ENCODE measurements at regions of chr20 and their contacts with region 1.

Region 1: DNA sequence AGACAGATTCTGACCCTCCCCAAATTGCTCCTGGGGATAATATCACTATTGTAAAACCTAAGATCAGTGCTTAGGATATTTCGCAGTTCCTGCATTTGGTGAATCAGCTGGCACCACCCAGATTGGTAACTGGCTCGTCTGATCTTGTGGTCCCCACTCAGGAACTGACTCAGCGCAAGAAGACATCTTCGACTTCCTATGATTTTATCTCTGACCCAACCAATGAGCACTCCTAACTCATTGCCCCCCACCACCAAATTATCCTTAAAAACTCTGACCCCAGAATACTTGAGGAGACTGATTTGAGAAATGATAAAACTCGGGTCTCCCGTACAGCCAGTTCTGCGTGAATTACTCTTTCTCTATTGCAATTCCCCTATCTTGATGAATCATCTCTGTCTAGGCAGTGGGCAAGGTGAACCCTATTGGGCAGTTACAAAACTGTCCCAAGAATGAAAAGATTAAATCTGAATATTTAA is 55.7 kb upstream of the PRND start:
- DNase-seq: peak; percentile 42
- H3K4me3 ChIP-seq: peak overlapping the region in 1 of 3 experiments; percentile 17
- H3K27ac ChIP-seq: peak overlapping the region; percentile 58
- H3K4me1 ChIP-seq: peaks cover 20% of the 10 kb centered on the region
- H3K27me3 ChIP-seq: no peaks in the 10 kb centered on the region
- CTCF ChIP-seq: no peak
- POLR2A ChIP-seq: no peak

Region 2: DNA sequence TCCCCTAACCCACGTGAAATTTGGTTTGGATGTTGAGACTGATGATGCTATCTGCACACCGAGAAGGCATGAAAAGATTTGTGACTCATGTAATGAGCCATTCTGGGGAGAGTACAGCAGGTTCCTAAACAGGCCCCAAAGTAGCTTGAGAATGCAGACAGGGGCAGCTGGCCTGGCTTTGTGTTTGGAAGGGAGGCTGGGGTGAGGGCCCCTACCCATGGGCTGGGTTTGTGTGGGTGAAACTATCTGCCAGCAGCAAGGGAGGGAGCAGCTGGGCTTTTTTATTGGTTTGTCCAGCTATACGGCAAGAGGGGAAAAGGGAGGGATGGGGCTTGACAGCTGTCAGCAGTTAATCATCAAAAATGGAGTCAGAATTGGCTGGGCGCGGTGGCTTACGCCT is 563.7 kb before region 1 on chr20:
- CTCF ChIA-PET with region 1: no interaction called
- POLR2A ChIA-PET with region 1: no interaction called
- dilution Hi-C with region 1: no loop called
- intact Hi-C with region 1: loop called (anchors 5 kb)
- DNase-seq: no peak
- H3K4me3 ChIP-seq: no peak overlapping the region
- H3K27ac ChIP-seq: no peak overlapping the region
- H3K4me1 ChIP-seq: no peaks in the 10 kb centered on the region
- H3K27me3 ChIP-seq: peaks cover 0 to 2% of the 10 kb centered on the region in 2 experiments
- CTCF ChIP-seq: no peak
- POLR2A ChIP-seq: no peak

Region 3: GRCh38 chr20:4633780-4634179 is 32.3 kb before region 1 on chr20:
- CTCF ChIA-PET with region 1: interaction called, 5 read pairs
- POLR2A ChIA-PET with region 1: interaction called, 5 read pairs
- dilution Hi-C with region 1: no loop called
- intact Hi-C with region 1: loop called (anchors 2 kb)
- DNase-seq: peak; percentile 88
- H3K4me3 ChIP-seq: no peak overlapping the region
- H3K27ac ChIP-seq: peak overlapping the region; percentile 80
- H3K4me1 ChIP-seq: peaks cover 16% of the 10 kb centered on the region
- H3K27me3 ChIP-seq: peaks cover 0 to 2% of the 10 kb centered on the region in 2 experiments
- CTCF ChIP-seq: no peak
- POLR2A ChIP-seq: no peak